ENCODE measurements at regions of chr2 and their contacts with region 1.

Region 1: GRCh38 chr2:96638144-96639121 is at the start of gene KANSL3:
- DNase-seq: peak; percentile 66 to 95
- ATAC-seq: peak; percentile 79 to 86
- H3K4me3 ChIP-seq: peak within 1 kb of the TSS; percentile 52
- H3K27ac ChIP-seq: peak within 1 kb of the TSS; percentile 94 to 98
- H3K4me1 ChIP-seq: peaks cover 29% of the 10 kb centered on the region; the same call in 2 of the 3 replicates
- CTCF ChIP-seq: no peak
- EP300 ChIP-seq: 0 out of 5 replicates have a peak, but pooled peaks of 1 of the 2 experiments have one; percentile 37
- POLR2A ChIP-seq: peak; percentile 80
- RAD21 ChIP-seq: peak; percentile 28 to 47; a peak in 4 of 5 replicates
- polyA plus RNA-seq, gene KANSL3: 23.0 and 33.1 TPM in 2 replicates

Region 2: DNA sequence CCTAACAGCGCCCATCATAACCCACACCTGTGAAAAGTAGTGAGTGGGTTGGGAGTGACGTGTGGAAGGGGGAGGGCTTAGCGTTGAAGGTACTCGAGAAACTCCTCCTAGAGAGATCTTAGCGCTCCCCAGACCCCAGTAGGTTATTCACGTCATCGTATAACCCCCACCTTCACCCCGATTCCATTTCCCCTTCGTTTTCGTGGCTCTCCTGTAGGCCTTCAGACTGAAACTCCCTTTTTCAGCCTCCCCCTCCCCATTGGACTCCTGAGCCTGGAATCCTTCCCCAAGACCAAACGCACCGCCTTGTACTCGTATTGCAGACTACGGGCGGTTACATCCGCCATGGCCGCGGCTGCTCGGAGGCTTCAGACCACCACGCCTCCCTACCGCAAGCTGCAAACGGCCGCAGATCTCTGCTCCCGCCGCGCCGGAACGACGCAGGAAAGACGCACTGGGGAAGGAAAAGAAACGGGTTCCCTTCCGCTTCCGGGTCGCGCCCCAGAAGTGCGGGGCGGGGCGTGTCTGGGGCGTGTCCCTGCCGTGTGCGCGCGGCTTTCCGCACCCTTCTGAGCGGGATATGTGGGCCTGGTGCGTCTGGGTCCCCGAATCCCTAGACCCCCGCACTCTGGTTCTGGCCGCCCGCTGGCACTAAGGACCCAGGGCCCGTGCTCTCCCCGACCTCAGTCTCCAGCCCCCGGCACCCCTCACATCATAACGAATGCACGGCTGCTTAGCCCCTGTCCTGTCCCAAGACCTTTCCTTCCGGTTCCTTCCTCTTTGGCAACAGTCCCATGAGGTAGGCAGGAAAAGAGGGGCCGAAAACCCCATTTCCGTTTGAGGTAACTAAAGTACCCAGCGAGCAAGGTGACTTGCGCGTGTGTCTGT is 333.1 kb before region 1 on chr2 and contains the start of gene SNRNP200:
- CTCF ChIA-PET with region 1: no interaction called
- POLR2A ChIA-PET with region 1: no interaction called
- DNase-seq: peak; percentile 70 to 91
- ATAC-seq: peak; percentile 97 to 99
- H3K4me3 ChIP-seq: peak within 1 kb of the TSS; percentile 95
- H3K27ac ChIP-seq: peak within 1 kb of the TSS; percentile 93 to 98
- H3K4me1 ChIP-seq: peaks cover 16% of the 10 kb centered on the region
- CTCF ChIP-seq: no peak
- EP300 ChIP-seq: no peak
- POLR2A ChIP-seq: peak; percentile 74
- RAD21 ChIP-seq: peak in 1 of 2 experiments; percentile 18; a peak in 1 of 5 replicates
- polyA plus RNA-seq, gene SNRNP200: 202 and 315 TPM in 2 replicates

Region 3: GRCh38 chr2:96386470-96386869 is 252.0 kb before region 1 on chr2:
- CTCF ChIA-PET with region 1: no interaction called
- POLR2A ChIA-PET with region 1: no interaction called
- DNase-seq: no peak
- ATAC-seq: no peak
- H3K4me3 ChIP-seq: no peak overlapping the region
- H3K27ac ChIP-seq: no peak overlapping the region
- H3K4me1 ChIP-seq: no peaks in the 10 kb centered on the region
- CTCF ChIP-seq: no peak
- EP300 ChIP-seq: no peak
- POLR2A ChIP-seq: no peak
- RAD21 ChIP-seq: no peak

Region 4: GRCh38 chr2:96625571-96626552 is 12.6 kb before region 1 on chr2:
- CTCF ChIA-PET with region 1: interaction called, 3 read pairs
- POLR2A ChIA-PET with region 1: interaction called, 24 read pairs
- DNase-seq: no peak
- ATAC-seq: no peak
- H3K4me3 ChIP-seq: no peak overlapping the region
- H3K27ac ChIP-seq: no peak overlapping the region
- H3K4me1 ChIP-seq: peaks cover 17% of the 10 kb centered on the region
- CTCF ChIP-seq: no peak
- EP300 ChIP-seq: no peak
- POLR2A ChIP-seq: no peak
- RAD21 ChIP-seq: no peak

Region 5: GRCh38 chr2:96649342-96649741 is 10.9 kb after region 1 on chr2:
- CTCF ChIA-PET with region 1: interaction called, 3 read pairs
- POLR2A ChIA-PET with region 1: interaction called, 13 read pairs
- DNase-seq: no peak
- ATAC-seq: no peak
- H3K4me3 ChIP-seq: no peak overlapping the region
- H3K27ac ChIP-seq: no peak overlapping the region
- H3K4me1 ChIP-seq: no peaks in the 10 kb centered on the region
- CTCF ChIP-seq: no peak
- EP300 ChIP-seq: no peak
- POLR2A ChIP-seq: 0 out of 2 replicates have a peak, but pooled peaks have one; percentile 8
- RAD21 ChIP-seq: no peak

Region 6: DNA sequence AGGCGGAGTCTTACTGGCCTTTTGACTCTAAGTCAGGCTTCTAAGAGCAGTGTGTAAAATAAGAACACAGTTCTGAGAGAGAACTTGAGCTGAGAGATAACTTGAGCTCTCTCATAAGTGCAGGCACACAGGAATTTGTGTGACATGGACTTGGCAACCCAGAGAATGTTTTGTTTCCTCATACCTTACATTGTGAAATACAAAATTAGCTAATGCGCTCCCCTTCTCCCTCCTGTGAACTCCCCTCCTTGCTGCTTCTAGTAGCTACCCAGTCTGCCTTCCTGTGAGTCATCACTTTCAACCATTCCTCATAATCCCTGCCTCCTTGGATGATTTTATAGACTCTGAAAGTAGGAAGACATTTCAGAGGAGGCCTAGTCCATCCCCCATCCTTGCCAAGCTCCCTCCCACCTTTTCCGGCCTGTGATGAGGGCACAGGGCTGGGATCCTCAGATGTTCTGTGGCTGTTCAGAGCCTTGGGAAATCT is 26.7 kb after region 1 on chr2:
- CTCF ChIA-PET with region 1: interaction called, 3 read pairs
- POLR2A ChIA-PET with region 1: interaction called, 26 read pairs
- DNase-seq: peak; percentile 69 to 89
- ATAC-seq: peak; percentile 94 to 96
- H3K4me3 ChIP-seq: no peak overlapping the region
- H3K27ac ChIP-seq: peak overlapping the region; percentile 52 to 88
- H3K4me1 ChIP-seq: peaks cover 11% of the 10 kb centered on the region
- CTCF ChIP-seq: no peak
- EP300 ChIP-seq: no peak
- POLR2A ChIP-seq: no peak
- RAD21 ChIP-seq: 0 out of 5 replicates have a peak, but pooled peaks of 1 of the 2 experiments have one; percentile 22